ENCODE measurements at regions of chr12 and their contacts with region 1.

Region 1: GRCh38 chr12:109110988-109111495 is 5.3 kb upstream of the ACACB start:
- DNase-seq: no peak
- H3K4me3 ChIP-seq: peak overlapping the region; percentile 69
- CTCF ChIP-seq: no peak

Region 2: DNA sequence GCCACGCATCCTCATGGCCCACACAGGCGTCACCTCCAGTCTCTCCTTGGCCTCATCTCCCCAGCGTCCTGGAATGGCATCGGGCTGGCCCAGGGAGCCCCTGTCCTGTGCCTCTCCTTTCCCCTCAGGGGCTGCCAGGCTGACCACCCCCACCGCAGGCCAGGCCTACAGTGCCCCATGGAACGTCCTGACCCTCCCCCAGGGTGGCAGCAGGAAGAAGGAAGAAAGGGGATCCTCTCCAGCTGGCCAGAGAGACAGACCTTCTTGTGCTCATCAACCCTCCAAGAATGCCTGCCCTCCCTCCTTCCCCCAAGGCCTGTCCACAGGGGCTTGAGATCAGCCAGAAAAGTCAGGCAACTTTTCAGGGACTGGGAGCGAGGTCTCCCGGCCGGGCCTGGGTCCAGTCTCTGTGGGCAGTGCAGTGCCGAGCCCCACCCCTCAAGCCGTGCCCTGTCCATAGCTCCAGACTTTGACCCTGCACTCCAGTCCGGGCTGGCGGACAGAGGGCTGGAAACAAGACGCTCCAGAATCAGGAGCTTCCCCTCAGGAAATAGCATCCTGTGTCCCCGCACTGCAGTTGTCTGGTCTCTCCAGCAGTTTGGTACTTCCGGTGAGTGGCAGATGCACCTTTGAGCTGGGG is 231.3 kb before region 1 on chr12 and contains the start of gene DAO:
- CTCF ChIA-PET with region 1: no interaction called
- POLR2A ChIA-PET with region 1: no interaction called
- DNase-seq: no peak
- H3K4me3 ChIP-seq: no peak within 1 kb of the TSS
- CTCF ChIP-seq: no peak

Region 3: DNA sequence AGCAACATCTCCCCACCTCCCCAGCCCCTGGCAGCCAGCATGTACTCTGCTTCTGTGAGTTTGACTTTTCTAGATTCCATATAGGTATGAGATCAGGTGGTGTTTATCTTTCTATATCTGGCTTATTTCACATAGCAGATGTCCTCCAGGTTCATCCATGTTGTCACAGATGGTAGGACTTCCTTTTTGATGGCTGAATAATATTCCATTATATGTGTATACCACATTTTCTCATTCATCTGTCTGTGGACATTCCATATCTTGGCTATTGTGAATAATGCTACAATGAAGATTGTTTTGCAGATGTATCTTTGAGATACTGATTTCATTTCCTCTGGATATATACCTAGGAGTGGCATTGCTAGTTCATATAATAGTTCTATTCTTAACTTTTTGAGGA is 36.2 kb before region 1 on chr12:
- CTCF ChIA-PET with region 1: no interaction called
- POLR2A ChIA-PET with region 1: no interaction called
- DNase-seq: no peak
- H3K4me3 ChIP-seq: no peak overlapping the region
- CTCF ChIP-seq: no peak

Region 4: GRCh38 chr12:109121346-109121880 is 10.4 kb after region 1 on chr12:
- CTCF ChIA-PET with region 1: interaction called, 27 read pairs
- POLR2A ChIA-PET with region 1: no interaction called
- DNase-seq: no peak
- H3K4me3 ChIP-seq: no peak overlapping the region
- CTCF ChIP-seq: no peak

Region 5: GRCh38 chr12:109147954-109148353 is 36.9 kb after region 1 on chr12:
- CTCF ChIA-PET with region 1: interaction called, 14 read pairs
- POLR2A ChIA-PET with region 1: no interaction called
- DNase-seq: no peak
- H3K4me3 ChIP-seq: no peak overlapping the region
- CTCF ChIP-seq: no peak

Region 6: DNA sequence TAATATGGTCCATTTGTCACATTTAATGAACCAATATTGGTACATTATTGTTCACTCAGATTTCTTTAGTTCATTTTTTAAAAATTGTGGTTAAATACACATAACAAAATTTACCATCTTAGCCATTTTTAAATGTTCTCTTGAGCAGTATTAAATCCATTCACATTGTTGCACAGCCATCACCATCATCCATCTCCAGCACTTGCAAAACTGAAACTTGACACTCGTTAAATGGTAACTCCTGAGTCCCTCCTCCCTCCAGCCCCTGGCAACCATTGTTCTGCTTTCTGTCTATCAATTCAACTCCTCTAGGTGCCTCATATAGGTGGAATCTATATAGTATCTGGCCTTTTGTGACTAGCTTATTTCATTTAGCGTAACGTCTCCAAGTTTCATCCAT is 91.7 kb after region 1 on chr12:
- CTCF ChIA-PET with region 1: no interaction called
- POLR2A ChIA-PET with region 1: no interaction called
- DNase-seq: no peak
- H3K4me3 ChIP-seq: no peak overlapping the region
- CTCF ChIP-seq: no peak

Region 7: DNA sequence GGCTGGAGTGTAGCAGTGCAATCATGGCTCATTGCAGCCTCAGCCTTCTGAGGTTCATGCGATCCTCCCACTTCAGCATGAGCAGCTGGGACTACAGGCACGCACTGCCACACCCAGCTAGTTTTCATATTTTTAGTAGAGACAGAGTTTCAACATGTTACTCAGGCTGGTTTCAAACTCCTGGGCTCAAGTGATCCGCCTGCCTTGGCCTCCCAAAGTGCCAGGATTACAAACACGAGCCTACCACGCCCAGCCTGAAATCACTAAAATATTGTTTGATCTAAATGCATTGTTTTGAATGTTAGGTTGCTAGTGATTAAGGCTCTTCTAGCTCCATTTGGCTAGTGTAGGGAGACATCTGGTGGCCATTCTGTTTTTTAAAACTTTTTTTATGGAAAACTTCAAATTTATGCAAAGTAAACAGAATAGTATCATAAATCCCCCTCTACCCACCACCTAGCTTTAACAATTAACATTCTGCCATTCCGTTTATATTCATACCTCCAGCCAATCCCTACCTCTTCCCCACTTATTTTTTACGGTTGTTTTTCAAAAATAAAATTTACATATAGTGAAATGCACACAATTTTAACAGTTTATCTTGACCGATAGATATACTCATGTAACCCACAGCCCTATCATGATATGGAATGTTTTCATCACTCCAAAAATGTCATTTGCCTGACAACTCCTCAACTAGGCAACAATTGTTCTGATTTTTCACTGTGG is 274.5 kb after region 1 on chr12:
- CTCF ChIA-PET with region 1: interaction called, 81 read pairs
- POLR2A ChIA-PET with region 1: no interaction called
- DNase-seq: no peak
- H3K4me3 ChIP-seq: no peak overlapping the region
- CTCF ChIP-seq: peak; percentile 34

Measured in AG04449 (cell line).